ENCODE measurements at regions of chr20 and their contacts with region 1.

Region 1: DNA sequence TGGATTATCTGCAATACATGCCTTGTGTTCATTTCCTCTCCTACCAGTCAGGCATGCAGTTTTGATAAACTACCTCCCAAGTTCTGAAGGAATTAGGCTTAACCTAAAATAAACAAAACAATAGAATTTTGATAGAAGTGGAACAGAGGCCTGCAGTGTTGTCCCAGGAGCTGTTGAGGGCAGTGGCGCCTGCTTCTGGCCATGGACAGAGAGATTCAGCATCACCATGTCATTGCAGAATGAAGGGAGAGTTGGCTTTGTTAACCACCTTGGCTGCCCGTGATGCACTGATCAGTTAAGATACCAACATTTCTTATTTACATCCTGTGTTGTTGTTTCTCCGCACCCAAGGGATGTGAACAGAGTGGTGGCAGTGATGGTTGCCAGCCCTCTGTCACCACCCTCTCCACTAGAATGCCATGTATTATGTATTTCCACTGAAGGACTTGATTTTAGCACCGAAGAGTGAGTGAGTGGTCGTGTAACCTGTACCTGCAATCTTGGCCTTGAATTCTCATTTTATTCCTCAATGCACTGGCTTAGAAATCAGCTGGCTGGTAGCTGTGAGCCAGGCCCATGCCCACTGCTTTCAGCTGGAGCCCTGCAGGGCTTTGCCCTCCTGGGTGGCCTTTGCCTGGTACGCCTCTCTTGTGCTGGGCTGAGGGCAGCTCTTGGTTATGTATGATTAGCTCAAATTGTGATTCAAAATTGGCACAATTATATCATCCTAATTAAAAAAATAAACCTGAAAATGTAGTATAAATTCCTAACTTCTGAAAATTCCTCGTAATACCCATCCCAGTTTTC is 56.5 kb downstream of the SHLD1 start:
- DNase-seq: peak in 1 of 5 donors; percentile 19
- H3K4me3 ChIP-seq: no peak overlapping the region
- H3K4me3 Mint-ChIP-seq: peak overlapping the region in 2 of 8 donors; percentile 11 to 43
- H3K27ac ChIP-seq: no peak overlapping the region
- H3K27ac Mint-ChIP-seq: peak overlapping the region in 5 of 7 donors; percentile 44 to 93 (median 74)
- H3K4me1 ChIP-seq: peaks cover 28% of the 10 kb centered on the region
- H3K4me1 Mint-ChIP-seq: peaks cover 10 to 56% (median 22%) of the 10 kb centered on the region in 4 donors
- H3K27me3 ChIP-seq: no peaks in the 10 kb centered on the region
- H3K27me3 Mint-ChIP-seq: no peaks in the 10 kb centered on the region

Region 2: GRCh38 chr20:5696011-5696559 is 110.6 kb before region 1 on chr20:
- CTCF ChIA-PET with region 1: no interaction called
- POLR2A ChIA-PET with region 1: no interaction called
- intact Hi-C with region 1: no loop called
- DNase-seq: no peak
- H3K4me3 ChIP-seq: no peak overlapping the region
- H3K4me3 Mint-ChIP-seq: no peak overlapping the region
- H3K27ac ChIP-seq: no peak overlapping the region
- H3K27ac Mint-ChIP-seq: peak overlapping the region in 2 of 7 donors; percentile 39 to 64
- H3K4me1 ChIP-seq: no peaks in the 10 kb centered on the region
- H3K4me1 Mint-ChIP-seq: peaks cover 0 to 4% (median 2%) of the 10 kb centered on the region in 4 donors
- H3K27me3 ChIP-seq: no peaks in the 10 kb centered on the region
- H3K27me3 Mint-ChIP-seq: no peaks in the 10 kb centered on the region

Region 3: DNA sequence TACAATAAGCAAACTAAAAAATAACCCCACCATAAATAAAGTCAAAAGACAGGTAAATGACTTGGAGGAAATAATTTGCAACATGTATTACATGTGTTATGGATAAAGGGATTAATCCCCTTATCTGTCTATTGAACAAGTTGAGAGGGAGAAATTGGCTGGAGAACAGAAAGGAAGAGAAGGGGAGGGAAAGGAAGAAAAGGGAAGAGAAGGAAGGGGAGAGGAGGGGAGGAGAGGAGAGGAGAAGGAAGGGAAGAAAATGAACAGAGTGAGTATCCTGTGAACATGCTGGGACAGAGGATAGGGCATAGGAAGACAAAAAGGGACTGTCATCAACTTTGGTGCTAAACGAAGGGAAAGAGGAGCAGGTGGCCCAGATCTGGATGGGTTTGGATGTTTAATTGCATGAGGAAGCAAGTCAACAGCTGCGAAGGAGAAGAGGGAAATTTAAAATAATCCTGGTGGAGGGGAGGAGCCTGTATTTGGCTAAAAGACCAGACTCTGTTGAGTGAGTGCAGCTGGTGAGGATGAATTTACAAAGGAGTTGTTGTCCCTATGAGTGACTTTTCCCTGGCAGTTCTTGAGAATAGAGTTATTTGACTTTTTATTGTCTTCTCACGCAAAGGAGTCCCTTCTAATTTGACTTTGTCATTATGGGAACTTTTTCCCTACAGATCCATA is 70.7 kb before region 1 on chr20:
- CTCF ChIA-PET with region 1: no interaction called
- POLR2A ChIA-PET with region 1: no interaction called
- intact Hi-C with region 1: no loop called
- DNase-seq: no peak
- H3K4me3 ChIP-seq: no peak overlapping the region
- H3K4me3 Mint-ChIP-seq: peak overlapping the region in 4 of 8 donors; percentile 15 to 57 (median 44)
- H3K27ac ChIP-seq: no peak overlapping the region
- H3K27ac Mint-ChIP-seq: peak overlapping the region; percentile 82 to 98 (median 96)
- H3K4me1 ChIP-seq: peaks cover 33% of the 10 kb centered on the region
- H3K4me1 Mint-ChIP-seq: peaks cover 20 to 42% (median 34%) of the 10 kb centered on the region in 4 donors
- H3K27me3 ChIP-seq: no peaks in the 10 kb centered on the region
- H3K27me3 Mint-ChIP-seq: no peaks in the 10 kb centered on the region

Region 4: DNA sequence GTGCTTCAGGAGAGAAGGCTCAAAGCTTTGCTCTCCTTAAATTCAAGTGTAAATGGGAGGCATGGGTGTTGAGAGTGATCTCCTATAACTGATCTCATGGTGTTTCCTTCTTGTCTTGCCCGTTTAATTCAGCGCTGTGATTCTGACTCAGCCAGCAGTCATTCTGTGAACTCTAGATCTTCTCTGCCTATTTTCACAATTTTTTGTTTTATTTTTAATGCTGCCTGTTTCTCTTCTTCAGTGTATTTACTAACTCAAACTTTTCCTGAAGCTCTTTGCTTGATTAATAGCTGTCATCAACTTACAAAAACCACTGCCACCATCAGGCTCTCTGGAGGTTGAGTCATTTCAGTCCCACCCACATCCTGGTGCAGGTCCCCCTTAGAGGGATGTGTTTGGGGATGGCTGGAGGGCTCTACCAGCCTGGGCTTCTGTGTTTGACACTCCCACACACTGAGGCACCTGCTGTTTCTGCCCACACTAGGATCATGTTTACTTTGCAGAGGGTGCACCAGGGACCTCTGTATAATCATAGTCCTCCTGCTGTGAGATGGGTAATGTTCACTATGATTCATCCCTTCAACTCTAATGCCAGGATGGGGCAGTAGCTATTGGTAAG is 37.5 kb after region 1 on chr20:
- CTCF ChIA-PET with region 1: no interaction called
- POLR2A ChIA-PET with region 1: no interaction called
- intact Hi-C with region 1: loop called (anchors 2 kb)
- DNase-seq: peak; percentile 23 to 79 (median 40)
- H3K4me3 ChIP-seq: no peak overlapping the region
- H3K4me3 Mint-ChIP-seq: peak overlapping the region; percentile 18 to 77 (median 72)
- H3K27ac ChIP-seq: peak overlapping the region; percentile 62
- H3K27ac Mint-ChIP-seq: peak overlapping the region; percentile 88 to 98 (median 93)
- H3K4me1 ChIP-seq: peaks cover 67% of the 10 kb centered on the region
- H3K4me1 Mint-ChIP-seq: peaks cover 53 to 69% (median 62%) of the 10 kb centered on the region in 4 donors
- H3K27me3 ChIP-seq: no peaks in the 10 kb centered on the region
- H3K27me3 Mint-ChIP-seq: no peaks in the 10 kb centered on the region

Region 5: GRCh38 chr20:6058684-6059295 is 252.1 kb after region 1 on chr20:
- CTCF ChIA-PET with region 1: no interaction called
- POLR2A ChIA-PET with region 1: no interaction called
- intact Hi-C with region 1: no loop called
- DNase-seq: no peak
- H3K4me3 ChIP-seq: no peak overlapping the region
- H3K4me3 Mint-ChIP-seq: no peak overlapping the region
- H3K27ac ChIP-seq: no peak overlapping the region
- H3K27ac Mint-ChIP-seq: no peak overlapping the region
- H3K4me1 ChIP-seq: no peaks in the 10 kb centered on the region
- H3K4me1 Mint-ChIP-seq: peaks cover 0 to 7% (median 4%) of the 10 kb centered on the region in 4 donors
- H3K27me3 ChIP-seq: no peaks in the 10 kb centered on the region
- H3K27me3 Mint-ChIP-seq: peaks cover 11 to 17% of the 10 kb centered on the region in 2 donors